ENCODE measurements at regions of chr7 and their contacts with region 1.

Region 1: DNA sequence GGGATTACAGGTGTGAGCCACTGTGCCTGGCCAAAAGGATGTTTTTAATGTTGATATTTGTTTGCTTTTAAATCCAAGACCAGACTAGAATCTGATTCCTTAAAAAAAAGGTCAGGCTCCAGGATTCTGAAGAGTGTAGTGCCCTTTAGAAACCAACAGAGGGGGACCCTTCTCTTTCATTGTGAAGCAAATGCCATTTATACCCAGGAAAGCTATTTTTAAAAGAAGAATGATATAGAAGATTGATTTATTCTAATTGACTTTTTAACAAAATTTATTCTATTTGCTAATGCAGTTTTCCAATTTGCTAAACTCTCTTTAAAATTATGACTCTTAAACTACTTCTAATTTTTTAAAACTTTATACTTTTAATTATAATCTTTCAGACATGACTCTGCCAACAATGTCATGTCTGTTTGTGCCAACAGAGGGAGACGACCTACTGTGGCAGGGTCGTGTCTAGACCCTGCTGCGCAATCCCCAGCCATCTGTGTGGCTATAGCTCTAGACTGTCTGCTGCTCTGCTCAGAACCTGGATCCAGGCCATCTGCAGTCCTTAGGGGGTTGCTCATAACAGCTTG is 201.0 kb upstream of the IMMP2L start:
- DNase-seq: peak; percentile 18
- ATAC-seq: peak; percentile 89
- H3K4me3 ChIP-seq: no peak overlapping the region
- H3K27ac ChIP-seq: no peak overlapping the region
- H3K4me1 ChIP-seq: no peaks in the 10 kb centered on the region
- H3K27me3 ChIP-seq: no peaks in the 10 kb centered on the region
- CTCF ChIP-seq: peak; percentile 76

Region 2: DNA sequence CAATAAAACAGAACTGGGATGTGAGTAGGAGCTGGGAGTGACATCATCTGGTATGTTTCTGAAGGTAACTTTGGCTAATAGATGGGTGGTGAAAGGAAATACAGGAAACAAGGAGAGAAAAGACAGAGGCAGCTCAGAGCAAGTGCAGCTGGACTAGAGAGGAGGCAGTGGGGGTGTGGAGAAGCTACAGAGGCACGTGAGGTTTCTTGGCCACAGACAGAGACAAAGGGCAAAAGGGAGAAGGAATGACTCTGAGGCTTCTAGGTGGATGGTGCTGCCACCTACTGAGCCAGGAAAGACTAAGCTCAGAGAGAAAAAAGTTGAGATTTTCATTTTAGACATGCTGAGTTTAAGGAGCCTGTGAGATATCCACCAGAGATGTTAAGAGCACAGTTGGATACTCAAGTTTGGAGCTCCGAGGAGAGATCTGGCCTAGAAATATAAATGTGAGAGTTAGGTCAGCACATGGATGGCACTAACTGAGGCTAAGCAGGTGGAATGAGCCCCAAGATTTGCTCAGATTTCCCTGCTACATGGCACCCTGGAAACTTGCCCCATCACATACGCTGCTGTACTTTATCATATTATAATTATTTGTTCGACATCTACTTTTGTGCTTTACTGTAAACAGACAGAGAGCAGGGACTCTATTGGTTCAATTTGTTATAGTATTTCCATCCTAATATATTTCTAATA is 92.0 kb after region 1 on chr7:
- CTCF ChIA-PET with region 1: interaction called, 7 read pairs
- POLR2A ChIA-PET with region 1: no interaction called
- in situ Hi-C with region 1: no loop called
- intact Hi-C with region 1: loop called (anchors 5 kb)
- DNase-seq: peak; percentile 25
- ATAC-seq: peak; percentile 66
- H3K4me3 ChIP-seq: no peak overlapping the region
- H3K27ac ChIP-seq: no peak overlapping the region
- H3K4me1 ChIP-seq: no peaks in the 10 kb centered on the region
- H3K27me3 ChIP-seq: no peaks in the 10 kb centered on the region
- CTCF ChIP-seq: peak; percentile 73

Region 3: DNA sequence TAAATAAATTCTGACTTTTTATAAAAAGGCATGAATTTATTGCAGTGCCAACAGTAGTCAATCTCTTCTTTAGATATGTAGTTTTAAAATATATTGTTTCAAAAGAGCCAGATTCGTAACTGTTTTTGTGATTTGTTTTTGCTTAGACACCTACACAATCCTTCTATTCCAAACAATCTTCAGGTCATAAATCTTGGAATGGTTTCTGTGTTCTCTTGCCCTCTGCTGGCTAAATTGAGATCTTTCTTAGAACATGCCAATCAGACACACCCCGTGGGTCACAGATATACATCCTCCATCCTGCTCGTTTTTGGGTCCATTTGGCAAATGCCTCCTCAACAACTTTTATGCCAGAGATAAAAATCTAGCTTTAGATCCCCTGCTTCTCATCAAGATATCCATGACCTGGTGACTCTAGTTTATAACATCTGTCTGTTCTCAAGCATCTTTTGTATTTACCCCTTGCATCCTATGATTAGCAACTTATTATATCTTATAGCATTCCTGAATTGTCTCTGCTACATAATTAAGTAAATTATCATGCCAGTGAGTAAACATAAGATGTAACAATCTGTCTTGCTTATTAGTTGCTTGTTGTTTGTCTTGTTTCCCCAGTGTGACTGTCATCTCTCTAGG is 651.7 kb after region 1 on chr7:
- CTCF ChIA-PET with region 1: interaction called, 6 read pairs
- POLR2A ChIA-PET with region 1: no interaction called
- in situ Hi-C with region 1: no loop called
- intact Hi-C with region 1: loop called (anchors 1 kb)
- DNase-seq: no peak
- ATAC-seq: peak; percentile 89
- H3K4me3 ChIP-seq: no peak overlapping the region
- H3K27ac ChIP-seq: no peak overlapping the region
- H3K4me1 ChIP-seq: no peaks in the 10 kb centered on the region
- H3K27me3 ChIP-seq: 0 out of 2 replicates have a peak, but pooled peaks cover 4% of the 10 kb centered on the region
- CTCF ChIP-seq: peak; percentile 75

Measured in Panc1 (cell line).